ENCODE measurements at regions of chr7 and their contacts with region 1.

Region 1: GRCh38 chr7:87345166-87345927 is at the start of gene CROT:
- DNase-seq: peak; percentile 96
- H3K4me3 Mint-ChIP-seq: peak within 1 kb of the TSS; percentile 99
- H3K27ac Mint-ChIP-seq: peak within 1 kb of the TSS; percentile 88
- H3K4me1 Mint-ChIP-seq: peaks cover 28% of the 10 kb centered on the region
- H3K27me3 Mint-ChIP-seq: no peaks in the 10 kb centered on the region
- CTCF ChIP-seq: no peak
- total RNA-seq, gene CROT: 5.7 and 6.5 TPM in 2 replicates

Region 2: GRCh38 chr7:87328281-87328680 is 17.1 kb before region 1 on chr7:
- CTCF ChIA-PET with region 1: interaction called, 5 read pairs
- POLR2A ChIA-PET with region 1: interaction called, 233 read pairs
- intact Hi-C with region 1: no loop called
- DNase-seq: no peak
- H3K4me3 Mint-ChIP-seq: no peak overlapping the region
- H3K27ac Mint-ChIP-seq: no peak overlapping the region
- H3K4me1 Mint-ChIP-seq: peaks cover 2% of the 10 kb centered on the region
- H3K27me3 Mint-ChIP-seq: no peaks in the 10 kb centered on the region
- CTCF ChIP-seq: no peak

Region 3: GRCh38 chr7:87948371-87948770 is 603.0 kb after region 1 on chr7:
- CTCF ChIA-PET with region 1: no interaction called
- POLR2A ChIA-PET with region 1: no interaction called
- intact Hi-C with region 1: no loop called
- DNase-seq: no peak
- H3K4me3 Mint-ChIP-seq: no peak overlapping the region
- H3K27ac Mint-ChIP-seq: no peak overlapping the region
- H3K4me1 Mint-ChIP-seq: no peaks in the 10 kb centered on the region
- H3K27me3 Mint-ChIP-seq: peaks cover 64% of the 10 kb centered on the region
- CTCF ChIP-seq: no peak

Measured in MCF 10A (cell line).